HCT116 (cell line): ENCODE measurements at regions of chr9 and their contacts with region 1.

Region 1: DNA sequence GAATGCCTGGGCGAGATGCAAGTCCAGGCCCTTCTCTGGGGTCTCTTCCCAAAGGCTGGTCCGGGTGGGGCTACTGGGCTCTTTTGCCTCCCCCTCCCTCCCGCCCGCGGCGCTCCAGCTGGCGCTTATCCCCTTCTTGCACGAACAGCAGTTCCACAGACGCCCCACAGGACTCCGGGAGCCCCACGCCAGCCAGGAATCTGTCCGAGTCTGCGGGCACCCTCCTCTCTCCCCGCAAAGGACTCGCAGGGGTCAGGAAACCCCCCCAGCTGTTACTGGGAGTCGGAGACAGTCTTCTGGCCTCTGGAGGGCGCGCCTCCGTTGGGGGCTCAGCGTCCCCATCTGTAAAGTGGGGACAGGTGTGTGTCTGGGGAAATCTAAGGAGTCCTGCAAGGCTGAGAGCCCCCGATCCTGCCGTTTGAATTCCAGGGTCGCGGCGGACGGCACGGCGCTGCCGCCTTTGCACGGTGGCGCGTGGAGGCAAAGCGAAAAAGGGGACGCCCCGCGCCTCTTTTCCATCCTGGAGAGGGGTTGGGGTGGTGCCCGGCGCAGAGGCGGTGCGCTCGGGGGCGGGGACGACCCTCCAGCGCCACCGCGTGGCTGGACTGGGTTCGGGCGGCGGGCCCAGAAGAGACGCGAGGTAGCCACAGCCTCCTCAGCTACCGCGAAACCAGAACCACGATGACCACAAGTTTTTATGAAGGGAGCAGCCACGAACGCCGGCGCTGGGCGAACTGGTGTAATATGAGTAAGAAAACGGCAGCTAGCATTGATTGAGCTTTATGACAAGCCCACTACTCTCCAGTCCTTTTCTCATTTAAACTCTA is 2.9 kb upstream of the CCIN start:
- DNase-seq: peak; percentile 79
- ATAC-seq: peak; percentile 98
- H3K4me3 ChIP-seq: peak overlapping the region; percentile 33 to 39
- H3K27ac ChIP-seq: no peak overlapping the region
- H3K4me1 ChIP-seq: peaks cover 0 to 10% of the 10 kb centered on the region in 2 experiments; a peak in 1 of 4 replicates
- H3K27me3 ChIP-seq: no peaks in the 10 kb centered on the region
- CTCF ChIP-seq: peak; percentile 84 to 89 (median 85)
- POLR2A ChIP-seq: no peak
- RAD21 ChIP-seq: peak; percentile 83

Region 2: DNA sequence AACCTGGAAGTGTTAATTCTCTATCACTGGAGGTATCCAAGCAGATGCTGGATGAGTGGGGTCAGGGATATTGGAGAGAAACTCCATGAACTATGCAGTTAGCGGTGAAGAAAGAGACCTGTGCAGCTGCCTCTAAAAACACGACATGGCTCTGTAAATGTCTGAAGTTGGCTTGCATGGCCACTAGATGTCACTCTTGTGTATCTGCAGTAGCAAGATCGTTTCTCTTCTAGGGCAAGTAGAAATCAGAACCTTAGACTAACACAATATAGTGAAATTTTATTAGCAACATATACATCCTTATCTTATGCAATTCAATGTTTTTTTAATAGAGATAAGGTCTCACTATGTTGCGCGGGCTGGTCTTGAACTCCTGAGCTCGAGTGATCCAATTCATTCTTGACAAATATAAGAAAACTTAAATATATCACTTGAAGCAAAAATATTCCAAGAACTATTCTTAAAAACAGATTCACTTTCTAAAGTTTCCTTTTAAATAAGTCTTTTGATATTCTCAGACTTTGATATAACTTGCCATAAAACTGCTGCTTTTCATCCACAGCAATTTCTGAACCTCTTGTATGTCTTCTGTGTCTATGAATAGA is 211.3 kb before region 1 on chr9:
- CTCF ChIA-PET with region 1: no interaction called
- POLR2A ChIA-PET with region 1: no interaction called
- RAD21 ChIA-PET with region 1: no interaction called
- intact Hi-C with region 1: loop called (anchors 5 kb)
- DNase-seq: peak; percentile 67
- ATAC-seq: peak; percentile 95
- H3K4me3 ChIP-seq: peak overlapping the region in 1 of 2 experiments; percentile 26; a peak in 1 of 4 replicates
- H3K27ac ChIP-seq: no peak overlapping the region
- H3K4me1 ChIP-seq: peaks cover 0 to 8% of the 10 kb centered on the region in 2 experiments; a peak in 3 of 4 replicates
- H3K27me3 ChIP-seq: no peaks in the 10 kb centered on the region
- CTCF ChIP-seq: peak; percentile 86 to 89 (median 88)
- POLR2A ChIP-seq: no peak
- RAD21 ChIP-seq: peak; percentile 83

Region 3: GRCh38 chr9:36008774-36009300 is 157.5 kb before region 1 on chr9:
- CTCF ChIA-PET with region 1: interaction called, 3 read pairs
- POLR2A ChIA-PET with region 1: no interaction called
- RAD21 ChIA-PET with region 1: no interaction called
- intact Hi-C with region 1: loop called (anchors 1 kb)
- DNase-seq: peak; percentile 76
- ATAC-seq: peak; percentile 98
- H3K4me3 ChIP-seq: no peak overlapping the region
- H3K27ac ChIP-seq: no peak overlapping the region
- H3K4me1 ChIP-seq: peaks cover 0 to 9% of the 10 kb centered on the region in 2 experiments; a peak in 2 of 4 replicates
- H3K27me3 ChIP-seq: no peaks in the 10 kb centered on the region; the same call in 1 of the 2 replicates
- CTCF ChIP-seq: peak; percentile 100
- POLR2A ChIP-seq: no peak
- RAD21 ChIP-seq: peak; percentile 86

Region 4: DNA sequence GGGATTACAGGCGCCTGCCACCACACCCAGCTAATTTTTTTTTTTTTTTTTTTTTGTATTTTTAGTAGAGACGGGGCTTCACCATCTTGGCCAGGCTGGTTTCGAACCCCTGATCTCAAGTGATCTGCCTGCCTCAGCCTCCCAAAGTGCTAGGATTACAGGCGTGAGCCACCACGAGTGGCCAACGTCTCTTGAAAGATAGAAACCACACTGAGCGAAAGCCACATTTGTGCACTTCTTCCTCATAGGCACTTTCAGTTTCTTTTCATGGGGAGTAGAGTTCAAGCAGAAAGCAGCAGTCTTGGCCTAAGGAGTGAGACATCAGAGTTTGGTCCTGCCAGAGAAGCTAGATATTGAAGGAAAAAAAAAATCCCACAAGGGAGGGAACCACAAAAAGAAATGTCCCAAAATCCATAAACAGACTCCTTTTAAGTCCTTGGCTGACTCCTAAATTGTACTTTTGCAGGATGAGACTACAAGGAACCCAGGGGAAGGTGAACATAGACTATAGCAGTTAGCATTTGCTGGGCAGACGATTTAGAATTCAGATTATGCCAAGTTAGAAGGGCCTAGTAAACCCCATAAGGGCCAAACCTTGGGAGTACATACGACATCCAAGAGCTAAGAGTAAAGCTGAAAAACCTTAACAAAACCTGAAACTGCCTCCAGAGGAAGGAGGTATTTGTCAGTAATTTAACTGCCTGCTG is 73.7 kb before region 1 on chr9:
- CTCF ChIA-PET with region 1: no interaction called
- POLR2A ChIA-PET with region 1: no interaction called
- RAD21 ChIA-PET with region 1: no interaction called
- intact Hi-C with region 1: no loop called
- DNase-seq: no peak
- ATAC-seq: no peak
- H3K4me3 ChIP-seq: no peak overlapping the region
- H3K27ac ChIP-seq: no peak overlapping the region
- H3K4me1 ChIP-seq: no peaks in the 10 kb centered on the region
- H3K27me3 ChIP-seq: no peaks in the 10 kb centered on the region
- CTCF ChIP-seq: no peak
- POLR2A ChIP-seq: no peak
- RAD21 ChIP-seq: no peak

Region 5: DNA sequence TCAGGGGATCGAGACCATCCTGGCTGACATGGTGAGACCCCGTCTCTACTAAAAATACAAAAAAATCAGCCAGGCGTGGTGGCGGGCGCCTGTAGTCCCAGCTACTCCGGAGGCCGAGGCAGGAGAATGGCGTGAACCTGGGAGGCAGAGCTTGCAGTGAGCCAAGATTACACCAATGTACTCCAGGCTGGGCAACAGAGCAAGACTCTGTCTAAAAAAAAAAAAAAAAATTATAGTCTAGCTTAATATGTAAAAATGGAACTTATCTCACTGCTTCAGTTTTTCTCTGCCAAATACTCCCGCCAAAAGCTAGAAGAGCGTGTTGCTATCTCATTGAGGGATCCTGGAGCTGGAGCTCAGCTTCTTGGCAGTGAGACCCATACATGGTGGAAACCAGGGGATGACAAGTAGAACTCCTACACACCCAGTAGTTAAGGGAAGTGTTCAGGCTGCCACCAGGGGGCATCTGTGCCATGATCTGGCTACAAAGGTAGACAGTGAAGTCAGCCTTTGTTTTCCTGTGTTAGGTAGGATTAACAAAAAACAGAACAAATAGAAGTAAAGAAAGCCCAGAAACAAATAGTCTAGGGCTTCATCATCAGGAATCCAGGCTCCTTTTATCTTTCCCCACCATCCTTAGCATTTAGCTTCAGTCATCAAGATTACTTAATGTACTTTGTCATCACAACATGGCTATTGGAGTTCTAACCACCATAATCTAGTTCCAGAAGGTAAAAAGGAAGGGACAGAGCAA is 63.4 kb before region 1 on chr9:
- CTCF ChIA-PET with region 1: interaction called, 36 read pairs
- POLR2A ChIA-PET with region 1: no interaction called
- RAD21 ChIA-PET with region 1: interaction called in 1 of 2 experiments, 4 read pairs
- intact Hi-C with region 1: loop called (anchors 1 kb)
- DNase-seq: peak; percentile 57
- ATAC-seq: peak; percentile 97
- H3K4me3 ChIP-seq: no peak overlapping the region
- H3K27ac ChIP-seq: no peak overlapping the region
- H3K4me1 ChIP-seq: peaks cover 0 to 24% of the 10 kb centered on the region in 2 experiments; a peak in 2 of 4 replicates
- H3K27me3 ChIP-seq: no peaks in the 10 kb centered on the region
- CTCF ChIP-seq: peak; percentile 76 to 93 (median 90)
- POLR2A ChIP-seq: no peak
- RAD21 ChIP-seq: peak; percentile 71

Region 6: DNA sequence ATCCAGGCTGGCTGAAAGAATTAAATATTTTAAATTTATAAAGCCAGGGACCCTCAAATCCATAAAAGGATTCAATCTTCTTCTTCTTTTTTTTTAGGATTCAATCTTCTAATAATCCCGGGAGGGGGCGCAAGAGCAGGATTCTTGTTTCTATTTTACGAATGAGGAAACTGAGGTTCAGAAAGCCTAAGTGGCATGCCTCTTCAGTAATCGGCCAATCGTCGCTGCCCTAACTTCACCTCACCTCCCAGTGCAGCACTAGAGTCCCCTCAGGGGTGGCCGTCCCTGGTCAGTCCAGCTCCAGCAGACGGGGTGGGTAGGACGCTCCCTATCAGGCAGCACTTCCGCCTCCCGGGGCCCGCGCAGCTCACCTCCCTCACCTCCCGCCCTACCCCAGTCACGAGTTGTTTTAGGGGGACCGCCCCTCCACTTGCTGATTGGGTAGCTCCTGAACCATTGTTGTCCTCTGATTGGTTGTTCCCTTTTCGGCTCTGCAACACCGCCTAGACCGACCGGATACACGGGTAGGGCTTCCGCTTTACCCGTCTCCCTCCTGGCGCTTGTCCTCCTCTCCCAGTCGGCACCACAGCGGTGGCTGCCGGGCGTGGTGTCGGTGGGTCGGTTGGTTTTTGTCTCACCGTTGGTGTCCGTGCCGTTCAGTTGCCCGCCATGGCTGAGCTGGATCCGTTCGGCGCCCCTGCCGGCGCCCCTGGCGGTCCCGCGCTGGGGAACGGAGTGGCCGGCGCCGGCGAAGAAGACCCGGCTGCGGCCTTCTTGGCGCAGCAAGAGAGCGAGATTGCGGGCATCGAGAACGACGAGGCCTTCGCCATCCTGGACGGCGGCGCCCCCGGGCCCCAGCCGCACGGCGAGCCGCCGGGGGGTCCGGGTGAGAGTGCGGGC is 24.3 kb after region 1 on chr9 and contains the start of gene CLTA:
- CTCF ChIA-PET with region 1: interaction called, 11 read pairs
- POLR2A ChIA-PET with region 1: interaction called, 7 read pairs
- RAD21 ChIA-PET with region 1: no interaction called
- intact Hi-C with region 1: no loop called
- DNase-seq: peak; percentile 98
- ATAC-seq: peak; percentile 98
- H3K4me3 ChIP-seq: peak within 1 kb of the TSS; percentile 87 to 91
- H3K27ac ChIP-seq: peak within 1 kb of the TSS; percentile 80
- H3K4me1 ChIP-seq: peaks cover 12 to 20% of the 10 kb centered on the region in 2 experiments
- H3K27me3 ChIP-seq: no peaks in the 10 kb centered on the region
- CTCF ChIP-seq: peak; percentile 35 to 56 (median 52); a peak in 4 of 6 replicates
- POLR2A ChIP-seq: peak; percentile 96
- RAD21 ChIP-seq: peak; percentile 41; the same call in 1 of the 2 replicates
- total RNA-seq, gene CLTA: 152 TPM

Region 7: GRCh38 chr9:36276781-36277181 is 110.5 kb after region 1 on chr9:
- CTCF ChIA-PET with region 1: no interaction called
- POLR2A ChIA-PET with region 1: no interaction called
- RAD21 ChIA-PET with region 1: no interaction called
- intact Hi-C with region 1: no loop called
- DNase-seq: no peak
- ATAC-seq: no peak
- H3K4me3 ChIP-seq: no peak overlapping the region
- H3K27ac ChIP-seq: no peak overlapping the region
- H3K4me1 ChIP-seq: no peaks in the 10 kb centered on the region
- H3K27me3 ChIP-seq: no peaks in the 10 kb centered on the region
- CTCF ChIP-seq: no peak
- POLR2A ChIP-seq: no peak
- RAD21 ChIP-seq: no peak

Region 8: DNA sequence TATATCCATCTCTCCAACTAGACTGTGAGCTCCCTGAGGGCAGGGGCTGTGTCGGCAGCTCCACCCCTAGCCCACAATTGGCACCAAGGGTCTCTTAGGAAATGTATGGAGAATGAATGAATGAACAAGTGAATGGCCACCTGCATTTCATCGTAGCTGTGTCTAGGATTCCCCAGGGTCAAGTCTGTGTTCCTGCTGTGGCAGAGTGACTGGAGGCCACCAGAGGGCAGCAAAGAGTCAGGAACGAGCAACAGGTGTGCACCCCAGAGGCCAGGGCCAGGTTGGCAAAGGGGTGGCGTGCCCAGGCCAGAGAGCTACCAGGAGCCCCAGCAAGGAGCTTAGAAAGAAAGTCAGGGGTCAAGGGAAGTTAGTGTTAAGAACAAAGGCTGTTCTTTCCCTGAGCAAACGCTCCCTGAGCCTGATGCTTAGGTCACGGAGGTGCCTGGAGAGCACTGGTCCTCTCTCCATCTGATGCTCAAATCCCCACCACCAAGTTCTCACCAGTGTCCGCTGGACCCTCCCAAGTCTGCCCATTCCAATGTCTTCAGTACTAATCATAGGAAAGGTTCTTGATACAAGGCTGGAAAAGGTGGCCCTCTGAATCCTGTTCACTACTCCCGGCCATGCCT is 707.0 kb after region 1 on chr9:
- CTCF ChIA-PET with region 1: no interaction called
- POLR2A ChIA-PET with region 1: no interaction called
- RAD21 ChIA-PET with region 1: no interaction called
- intact Hi-C with region 1: no loop called
- DNase-seq: peak; percentile 43
- ATAC-seq: peak; percentile 99
- H3K4me3 ChIP-seq: no peak overlapping the region
- H3K27ac ChIP-seq: no peak overlapping the region
- H3K4me1 ChIP-seq: no peaks in the 10 kb centered on the region
- H3K27me3 ChIP-seq: peaks cover 18% of the 10 kb centered on the region; the same call in 1 of the 2 replicates
- CTCF ChIP-seq: peak; percentile 91 to 96 (median 92)
- POLR2A ChIP-seq: no peak
- RAD21 ChIP-seq: peak; percentile 97